ENCODE measurements at regions of chr15 and their contacts with region 1.

Region 1: GRCh38 chr15:43225201-43225949 is 4.6 kb upstream of the EPB42 start:
- DNase-seq: peak; percentile 56
- ATAC-seq: peak; percentile 99
- H3K4me3 ChIP-seq: no peak overlapping the region
- H3K27ac ChIP-seq: no peak overlapping the region
- H3K4me1 ChIP-seq: no peaks in the 10 kb centered on the region
- H3K27me3 ChIP-seq: no peaks in the 10 kb centered on the region
- CTCF ChIP-seq: peak; percentile 75 to 85 (median 83)
- POLR2A ChIP-seq: no peak
- RAD21 ChIP-seq: peak; percentile 81

Region 2: GRCh38 chr15:43214592-43215295 is 10.6 kb before region 1 on chr15:
- CTCF ChIA-PET with region 1: interaction called, 21 read pairs
- POLR2A ChIA-PET with region 1: no interaction called
- RAD21 ChIA-PET with region 1: no interaction called
- intact Hi-C with region 1: no loop called
- DNase-seq: no peak
- ATAC-seq: no peak
- H3K4me3 ChIP-seq: no peak overlapping the region
- H3K27ac ChIP-seq: no peak overlapping the region
- H3K4me1 ChIP-seq: peaks cover 0 to 3% of the 10 kb centered on the region in 2 experiments; a peak in 1 of 4 replicates
- H3K27me3 ChIP-seq: no peaks in the 10 kb centered on the region
- CTCF ChIP-seq: no peak
- POLR2A ChIP-seq: no peak
- RAD21 ChIP-seq: no peak

Region 3: DNA sequence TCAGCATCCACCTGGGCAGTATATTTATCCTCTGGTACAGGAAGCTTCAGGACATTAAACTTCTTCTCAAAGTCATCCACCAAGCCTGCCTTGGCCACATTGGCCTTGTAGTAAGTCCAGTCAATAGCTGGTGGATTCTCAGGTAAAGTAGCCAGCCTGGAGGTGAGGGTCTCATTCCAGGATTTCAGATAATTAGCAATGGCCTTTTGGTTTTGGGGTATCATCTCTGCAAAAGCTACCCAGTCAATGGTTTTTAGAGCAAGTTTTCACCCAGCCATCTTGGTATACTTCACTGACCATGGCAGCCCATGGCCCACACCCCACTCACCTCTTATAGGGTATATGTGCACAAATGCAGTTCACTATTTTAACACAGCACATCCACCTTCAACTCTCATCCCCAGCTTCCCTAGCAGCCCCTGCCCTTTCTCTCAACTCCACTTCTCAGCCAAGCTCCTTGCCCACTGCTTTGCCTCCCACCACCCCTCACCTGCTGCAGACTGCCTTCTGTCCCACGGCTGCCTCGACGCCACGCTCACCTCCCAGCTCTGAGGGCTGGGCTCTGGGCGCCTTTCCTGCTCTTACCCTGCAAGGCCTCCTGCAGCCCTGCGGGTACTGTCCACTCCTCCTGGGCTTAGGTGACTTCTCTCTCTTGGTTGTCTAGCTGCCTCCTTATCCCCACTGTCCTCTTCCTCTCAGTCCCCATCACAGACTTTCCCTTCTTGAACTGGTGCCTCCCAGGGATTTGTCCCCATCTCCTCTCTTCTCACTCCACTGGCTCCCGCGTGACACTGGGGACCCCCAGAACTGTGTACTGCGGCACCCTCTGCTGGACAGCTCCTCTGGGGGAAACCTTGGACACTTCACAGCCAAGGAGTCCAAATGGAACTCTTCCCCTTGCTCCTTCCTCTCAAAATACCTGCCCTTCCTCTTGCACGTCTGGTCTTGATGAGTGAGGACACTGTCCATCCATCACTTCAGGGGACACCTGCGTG is 43.0 kb after region 1 on chr15:
- CTCF ChIA-PET with region 1: interaction called, 25 read pairs
- POLR2A ChIA-PET with region 1: no interaction called
- RAD21 ChIA-PET with region 1: interaction called, 3 to 9 read pairs
- intact Hi-C with region 1: loop called (anchors 5 kb)
- DNase-seq: no peak
- ATAC-seq: peak; percentile 77
- H3K4me3 ChIP-seq: no peak overlapping the region
- H3K27ac ChIP-seq: no peak overlapping the region
- H3K4me1 ChIP-seq: no peaks in the 10 kb centered on the region
- H3K27me3 ChIP-seq: peaks cover 17% of the 10 kb centered on the region
- CTCF ChIP-seq: peak; percentile 31 to 52 (median 50); a peak in 5 of 6 replicates
- POLR2A ChIP-seq: no peak
- RAD21 ChIP-seq: peak; percentile 58